HEK293 (cell line): ENCODE measurements at regions of chr1 and their contacts with region 1.

Region 1: DNA sequence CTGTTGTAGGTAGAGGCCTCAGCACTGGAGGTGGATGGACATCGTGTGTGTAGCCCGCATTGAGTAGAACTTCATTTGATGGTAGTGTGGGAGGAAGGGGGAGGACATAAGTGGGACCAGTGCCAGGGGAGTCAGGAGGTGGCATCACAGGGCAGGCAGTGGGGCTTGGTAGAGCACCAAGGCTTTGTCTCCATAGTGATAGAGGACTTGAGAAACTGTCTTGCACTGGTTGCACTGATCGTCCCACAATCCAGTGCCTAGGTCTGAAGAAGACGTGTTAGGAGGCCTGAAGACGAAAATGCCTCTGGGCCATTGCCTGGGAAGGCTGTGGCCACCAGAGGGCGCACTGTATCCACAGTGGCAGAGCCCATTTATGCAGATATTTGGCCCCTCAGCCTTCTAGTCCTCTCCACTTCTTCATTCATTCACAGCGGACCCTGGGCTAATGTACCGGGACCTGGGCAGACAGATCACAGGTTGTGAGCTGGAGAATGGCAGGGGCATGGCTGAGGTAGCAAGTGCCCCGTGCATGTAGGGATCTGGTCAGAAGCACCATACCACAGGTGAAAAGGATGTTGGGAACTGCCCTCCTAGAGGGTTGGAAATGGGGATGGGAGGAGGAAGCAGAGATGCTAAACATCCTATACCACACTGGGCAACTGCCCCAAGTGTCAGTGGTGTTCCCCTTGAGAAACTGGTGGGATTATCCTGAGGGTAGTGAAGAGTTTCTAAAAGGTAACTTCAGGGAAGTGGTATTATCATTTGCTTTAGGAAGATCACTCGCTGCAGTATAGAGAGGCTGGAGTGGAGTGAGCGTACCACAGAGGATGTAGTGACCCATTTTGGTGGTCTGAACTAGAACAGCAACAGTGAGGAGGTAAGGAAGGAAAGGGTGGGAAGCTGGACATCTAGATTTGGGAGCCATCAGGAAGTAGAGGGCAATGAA is 95.3 kb downstream of the PIK3R3 start:
- H3K4me3 ChIP-seq: no peak overlapping the region
- H3K27ac ChIP-seq: no peak overlapping the region
- H3K4me1 ChIP-seq: peaks cover 4% of the 10 kb centered on the region
- CTCF ChIP-seq: peak; percentile 97

Region 2: GRCh38 chr1:46102769-46103476 is 65.8 kb after region 1 on chr1:
- CTCF ChIA-PET with region 1: no interaction called
- POLR2A ChIA-PET with region 1: no interaction called
- H3K4me3 ChIP-seq: no peak overlapping the region
- H3K27ac ChIP-seq: no peak overlapping the region
- H3K4me1 ChIP-seq: no peaks in the 10 kb centered on the region
- CTCF ChIP-seq: no peak

Region 3: DNA sequence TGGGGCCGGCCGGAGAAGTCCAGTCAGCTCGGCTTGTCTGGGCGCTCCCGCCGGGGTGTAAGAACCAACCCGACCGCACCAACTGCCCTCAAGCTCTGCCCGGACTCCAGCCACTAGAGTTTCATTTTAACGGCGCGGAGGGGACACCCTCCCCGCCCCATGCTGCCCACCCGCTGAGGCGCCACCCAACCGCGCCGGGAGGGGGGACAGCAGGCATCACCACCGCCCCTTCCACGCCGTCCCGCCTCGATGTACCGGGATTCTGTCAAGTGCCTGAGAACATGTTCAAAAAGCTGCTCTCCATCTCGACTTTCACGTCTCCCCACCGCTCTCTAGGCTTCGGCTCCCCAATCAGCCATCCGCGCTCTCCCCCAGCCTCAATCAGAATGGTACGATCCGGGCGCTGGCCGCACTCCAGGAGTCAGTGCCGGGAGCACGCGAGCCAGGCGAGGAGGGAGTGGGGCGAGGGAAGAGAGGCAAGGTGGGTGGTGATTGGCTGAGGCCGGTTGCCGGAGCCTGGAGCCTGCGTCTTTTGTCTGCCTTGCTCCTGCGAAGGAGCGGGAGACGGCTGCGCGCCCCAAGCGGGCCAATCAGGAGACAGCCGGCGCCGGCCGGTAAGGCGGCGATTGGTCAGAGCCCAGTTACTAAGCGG is 95.5 kb after region 1 on chr1 and contains the start of gene PIK3R3:
- CTCF ChIA-PET with region 1: interaction called, 5 read pairs
- POLR2A ChIA-PET with region 1: interaction called, 15 read pairs
- H3K4me3 ChIP-seq: peak within 1 kb of the TSS; percentile 66
- H3K27ac ChIP-seq: peak within 1 kb of the TSS; percentile 100
- H3K4me1 ChIP-seq: peaks cover 10% of the 10 kb centered on the region
- CTCF ChIP-seq: peak; percentile 52; the same call in 1 of the 2 replicates

Region 4: DNA sequence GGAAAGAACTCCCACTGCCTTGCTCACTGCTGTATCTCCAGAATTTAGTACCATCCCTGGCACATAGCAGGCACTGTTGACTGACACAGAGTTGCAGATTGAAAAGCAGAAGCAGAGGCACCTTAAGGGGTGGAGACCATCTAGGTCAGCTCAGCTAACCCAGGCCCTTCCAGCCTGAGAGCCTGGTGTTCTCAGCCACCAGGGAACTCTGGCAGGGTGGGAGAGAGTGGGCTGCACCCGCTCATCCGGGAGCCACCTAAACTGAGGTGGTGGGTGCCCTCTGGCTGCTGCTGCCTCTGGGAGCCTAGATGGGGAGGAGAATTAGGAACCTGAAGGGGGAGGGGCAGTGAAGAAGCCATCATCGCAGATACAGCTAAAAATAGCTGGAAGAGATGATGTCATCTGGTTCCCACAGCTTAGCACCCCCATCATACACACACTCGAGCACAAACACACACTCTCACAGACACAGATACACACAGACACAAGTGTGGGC is 136.2 kb after region 1 on chr1:
- CTCF ChIA-PET with region 1: interaction called, 148 read pairs
- POLR2A ChIA-PET with region 1: no interaction called
- H3K4me3 ChIP-seq: no peak overlapping the region
- H3K27ac ChIP-seq: no peak overlapping the region
- H3K4me1 ChIP-seq: no peaks in the 10 kb centered on the region; the same call in 1 of the 2 replicates
- CTCF ChIP-seq: peak; percentile 57; the same call in 1 of the 2 replicates

Region 5: GRCh38 chr1:46179138-46180081 is 142.2 kb after region 1 on chr1:
- CTCF ChIA-PET with region 1: interaction called, 148 read pairs
- POLR2A ChIA-PET with region 1: interaction called, 3 read pairs
- H3K4me3 ChIP-seq: no peak overlapping the region
- H3K27ac ChIP-seq: no peak overlapping the region
- H3K4me1 ChIP-seq: peaks cover 3% of the 10 kb centered on the region; the same call in 1 of the 2 replicates
- CTCF ChIP-seq: peak; percentile 99